ENCODE measurements at regions of chr18 and their contacts with region 1.

Region 1: DNA sequence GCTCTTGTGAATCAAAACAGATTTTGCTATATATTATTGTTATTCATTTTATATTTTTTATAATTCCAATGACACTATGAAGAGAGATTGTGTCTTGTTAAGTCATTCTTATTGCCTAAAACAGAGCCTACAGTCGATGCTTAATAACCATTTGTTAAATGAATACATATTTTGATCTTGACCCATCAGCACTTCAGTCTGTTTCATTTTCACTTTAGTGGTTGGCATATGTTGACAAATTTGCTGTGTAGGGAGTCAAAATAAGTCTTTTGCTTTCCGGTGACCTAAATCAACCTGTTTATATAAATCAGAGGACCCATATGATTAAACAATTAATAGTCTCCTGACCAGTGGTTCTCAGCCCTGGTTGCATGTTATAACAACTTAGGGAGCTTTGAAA is 97.1 kb downstream of the TXNL1 start:
- DNase-seq: no peak
- ATAC-seq: no peak
- H3K4me3 ChIP-seq: no peak overlapping the region
- H3K27ac ChIP-seq: no peak overlapping the region
- H3K4me1 ChIP-seq: no peaks in the 10 kb centered on the region
- H3K27me3 ChIP-seq: no peaks in the 10 kb centered on the region
- CTCF ChIP-seq: no peak

Region 2: DNA sequence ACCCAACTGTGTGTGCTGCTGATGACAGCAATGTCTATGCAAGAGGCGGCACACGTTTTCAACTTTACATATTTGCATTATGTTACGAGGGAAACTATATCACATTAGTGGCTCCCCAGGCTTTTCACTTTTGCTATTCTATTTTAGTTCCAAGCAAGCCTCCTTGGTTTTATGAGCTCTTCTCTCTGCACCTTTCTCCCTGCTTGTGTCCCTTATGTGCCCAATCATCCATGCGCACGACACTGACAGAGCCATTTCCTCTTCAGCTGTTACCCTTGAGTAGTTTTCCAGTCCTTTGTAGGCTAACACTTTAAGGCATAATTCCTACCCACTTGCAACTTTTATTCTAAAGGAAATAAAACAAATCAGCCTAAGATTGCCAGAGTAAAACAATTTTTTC is 1107.7 kb before region 1 on chr18:
- CTCF ChIA-PET with region 1: no interaction called
- POLR2A ChIA-PET with region 1: no interaction called
- in situ Hi-C with region 1: no loop called
- intact Hi-C with region 1: no loop called
- DNase-seq: no peak
- ATAC-seq: no peak
- H3K4me3 ChIP-seq: no peak overlapping the region
- H3K27ac ChIP-seq: no peak overlapping the region
- H3K4me1 ChIP-seq: no peaks in the 10 kb centered on the region
- H3K27me3 ChIP-seq: no peaks in the 10 kb centered on the region
- CTCF ChIP-seq: no peak

Region 3: DNA sequence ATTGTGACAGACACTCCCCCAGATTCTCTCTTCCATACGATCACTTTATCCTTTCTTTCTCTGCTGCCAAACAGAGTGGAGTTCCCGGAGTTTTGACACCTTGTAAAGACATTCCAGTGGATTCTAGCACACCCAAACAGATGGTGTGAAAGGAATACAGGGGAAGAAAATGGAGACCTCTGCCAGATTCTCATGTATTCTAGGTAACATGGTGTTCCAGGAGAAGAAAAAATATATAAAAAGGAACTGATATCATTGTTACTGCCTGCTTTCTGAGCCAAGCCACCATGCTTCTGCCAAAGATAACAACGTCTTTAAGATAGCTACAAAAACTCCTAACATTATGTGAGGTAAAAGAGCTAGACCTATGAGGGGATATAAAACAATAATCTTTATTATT is 39.4 kb before region 1 on chr18:
- CTCF ChIA-PET with region 1: no interaction called
- POLR2A ChIA-PET with region 1: no interaction called
- in situ Hi-C with region 1: no loop called
- intact Hi-C with region 1: no loop called
- DNase-seq: no peak
- ATAC-seq: no peak
- H3K4me3 ChIP-seq: no peak overlapping the region
- H3K27ac ChIP-seq: no peak overlapping the region
- H3K4me1 ChIP-seq: no peaks in the 10 kb centered on the region
- H3K27me3 ChIP-seq: no peaks in the 10 kb centered on the region
- CTCF ChIP-seq: no peak

Region 4: DNA sequence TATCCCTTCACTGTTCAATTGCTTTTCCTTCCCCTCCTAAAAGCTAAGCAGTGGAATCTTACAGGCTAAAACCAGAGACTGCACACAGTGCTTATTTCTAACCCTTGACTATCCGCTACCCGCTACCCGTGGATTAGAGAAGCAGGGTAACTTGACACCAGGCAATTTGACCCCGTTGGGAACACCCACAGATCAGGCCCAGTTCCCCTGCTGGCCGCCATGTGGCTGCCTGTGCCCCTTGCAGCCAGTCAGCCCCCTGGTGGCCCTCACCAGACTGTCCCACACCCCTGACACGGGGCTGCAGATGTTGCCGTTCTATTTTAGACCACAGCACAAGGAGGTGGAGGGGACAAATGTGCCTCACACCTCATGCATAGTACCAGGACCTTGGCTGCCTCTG is 22.2 kb after region 1 on chr18:
- CTCF ChIA-PET with region 1: no interaction called
- POLR2A ChIA-PET with region 1: interaction called, 18 read pairs
- in situ Hi-C with region 1: no loop called
- intact Hi-C with region 1: no loop called
- DNase-seq: no peak
- ATAC-seq: no peak
- H3K4me3 ChIP-seq: no peak overlapping the region
- H3K27ac ChIP-seq: no peak overlapping the region
- H3K4me1 ChIP-seq: no peaks in the 10 kb centered on the region
- H3K27me3 ChIP-seq: no peaks in the 10 kb centered on the region
- CTCF ChIP-seq: peak; percentile 15; the same call in 1 of the 2 replicates